BJ (cell line): ENCODE measurements at regions of chr19 and their contacts with region 1.

Region 1: GRCh38 chr19:2648528-2648937 is 54.0 kb downstream of the GNG7 start:
- DNase-seq: no peak
- H3K4me3 ChIP-seq: no peak overlapping the region
- H3K27me3 ChIP-seq: peaks cover 2% of the 10 kb centered on the region; the same call in 1 of the 2 replicates
- CTCF ChIP-seq: peak; percentile 70

Region 2: DNA sequence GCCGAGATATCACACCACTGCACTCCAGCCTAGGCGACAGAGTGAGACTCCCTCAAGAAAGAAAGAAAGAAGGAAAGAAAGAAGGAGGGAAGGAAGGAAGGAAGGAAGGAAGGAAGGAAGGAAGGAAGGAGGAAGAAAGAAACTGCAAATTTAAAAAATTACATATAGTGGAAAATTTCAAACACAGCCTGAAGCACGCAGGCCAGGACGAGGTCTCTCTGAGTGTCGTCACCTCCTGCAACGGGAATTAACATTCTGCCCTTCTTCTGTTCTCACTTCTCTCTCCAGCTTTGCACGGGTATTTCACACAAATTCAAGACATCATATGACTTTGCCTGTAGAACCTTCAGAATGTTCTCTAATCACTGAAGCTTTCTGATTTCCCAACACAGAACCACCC is 54.2 kb before region 1 on chr19:
- CTCF ChIA-PET with region 1: no interaction called
- POLR2A ChIA-PET with region 1: no interaction called
- DNase-seq: no peak
- H3K4me3 ChIP-seq: no peak overlapping the region
- H3K27me3 ChIP-seq: peaks cover 4% of the 10 kb centered on the region; the same call in 1 of the 2 replicates
- CTCF ChIP-seq: no peak

Region 3: GRCh38 chr19:2636897-2637683 is 11.4 kb before region 1 on chr19:
- CTCF ChIA-PET with region 1: interaction called, 16 read pairs
- POLR2A ChIA-PET with region 1: no interaction called
- DNase-seq: no peak
- H3K4me3 ChIP-seq: no peak overlapping the region
- H3K27me3 ChIP-seq: peaks cover 2% of the 10 kb centered on the region; the same call in 1 of the 2 replicates
- CTCF ChIP-seq: peak; percentile 96

Region 4: GRCh38 chr19:2661615-2662014 is 13.1 kb after region 1 on chr19:
- CTCF ChIA-PET with region 1: interaction called, 12 read pairs
- POLR2A ChIA-PET with region 1: no interaction called
- DNase-seq: no peak
- H3K4me3 ChIP-seq: no peak overlapping the region
- H3K27me3 ChIP-seq: peaks cover 1% of the 10 kb centered on the region; the same call in 1 of the 2 replicates
- CTCF ChIP-seq: no peak

Region 5: GRCh38 chr19:2722541-2723344 is 74.2 kb after region 1 on chr19:
- CTCF ChIA-PET with region 1: interaction called, 15 read pairs
- POLR2A ChIA-PET with region 1: no interaction called
- DNase-seq: peak; percentile 33
- H3K4me3 ChIP-seq: no peak overlapping the region
- H3K27me3 ChIP-seq: peaks cover 4% of the 10 kb centered on the region; the same call in 1 of the 2 replicates
- CTCF ChIP-seq: no peak

Region 6: GRCh38 chr19:2750808-2751443 is 102.4 kb after region 1 on chr19:
- CTCF ChIA-PET with region 1: interaction called, 244 read pairs
- POLR2A ChIA-PET with region 1: no interaction called
- DNase-seq: no peak
- H3K4me3 ChIP-seq: no peak overlapping the region
- H3K27me3 ChIP-seq: no peaks in the 10 kb centered on the region
- CTCF ChIP-seq: no peak

Region 7: DNA sequence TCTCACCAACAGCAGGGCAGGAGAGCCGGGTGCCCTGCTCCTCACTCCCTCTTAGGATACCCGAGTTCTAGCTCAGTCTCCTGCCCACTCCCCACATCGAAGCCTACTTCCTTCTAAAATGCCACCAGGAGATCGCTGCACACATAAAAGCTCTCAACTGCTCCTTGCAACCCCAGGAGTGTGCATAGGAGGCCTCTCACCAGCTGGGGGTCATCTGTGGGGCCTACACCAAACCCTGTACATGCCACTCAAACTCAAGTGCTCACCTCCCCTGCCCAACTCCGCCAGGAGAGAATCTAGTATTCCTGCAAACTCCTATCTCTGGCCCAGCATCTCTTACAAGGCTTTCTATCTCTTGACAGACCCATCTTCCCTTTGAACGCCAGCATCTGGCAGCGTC is 131.8 kb after region 1 on chr19:
- CTCF ChIA-PET with region 1: interaction called, 10 read pairs
- POLR2A ChIA-PET with region 1: no interaction called
- DNase-seq: no peak
- H3K4me3 ChIP-seq: no peak overlapping the region
- H3K27me3 ChIP-seq: no peaks in the 10 kb centered on the region
- CTCF ChIP-seq: no peak

Region 8: GRCh38 chr19:2820112-2820702 is 171.7 kb after region 1 on chr19:
- CTCF ChIA-PET with region 1: no interaction called
- POLR2A ChIA-PET with region 1: no interaction called
- DNase-seq: no peak
- H3K4me3 ChIP-seq: peak overlapping the region; percentile 48
- H3K27me3 ChIP-seq: no peaks in the 10 kb centered on the region
- CTCF ChIP-seq: no peak

Region 9: DNA sequence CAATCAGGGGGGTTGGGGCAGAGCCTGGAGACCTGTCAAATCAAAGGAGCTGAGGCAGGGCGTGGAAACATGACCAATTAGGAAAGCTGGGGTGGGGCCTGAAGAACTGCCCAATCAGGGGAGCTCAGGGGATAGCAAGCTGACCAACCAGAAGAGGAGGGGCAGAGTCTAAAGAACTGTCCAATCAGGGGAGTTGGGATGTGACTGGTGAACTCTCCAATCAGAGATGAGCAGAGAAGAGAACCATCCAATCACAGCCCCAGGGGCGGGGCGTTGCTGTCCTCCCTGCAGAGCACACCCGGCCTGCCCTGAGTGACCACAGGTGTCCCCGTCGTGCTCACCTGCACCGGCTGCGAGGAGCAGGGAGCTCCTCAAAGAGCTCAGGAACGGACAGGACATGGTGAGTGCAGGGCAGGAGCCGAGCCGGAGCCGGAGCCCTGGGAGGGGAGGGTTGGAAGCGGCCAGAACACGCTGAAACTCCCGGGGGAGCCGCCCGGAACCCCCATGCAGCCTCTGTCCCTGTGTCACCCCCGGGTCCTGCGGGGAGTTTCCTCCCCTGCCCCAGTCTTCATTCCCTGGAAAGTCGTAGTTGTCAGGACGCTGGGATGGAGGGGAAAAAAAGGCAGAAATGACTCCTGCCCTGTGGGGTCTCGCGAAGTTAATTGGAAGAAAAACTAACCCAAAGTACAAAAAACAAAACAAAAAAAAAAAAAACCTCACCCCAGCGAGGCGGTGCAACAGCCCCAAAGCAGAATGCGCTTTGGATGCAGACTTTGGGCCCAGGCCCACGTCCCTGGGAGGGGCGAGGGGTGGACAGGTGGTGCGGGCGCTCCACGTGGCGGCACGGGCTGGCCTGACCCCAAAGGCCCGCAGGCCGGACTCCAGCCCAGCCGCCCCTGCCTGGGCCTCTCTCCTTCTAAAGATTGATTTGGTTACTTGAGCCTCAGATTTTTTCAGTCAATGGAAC is 218.8 kb after region 1 on chr19 and contains the start of gene ZNF556:
- CTCF ChIA-PET with region 1: interaction called, 10 read pairs
- POLR2A ChIA-PET with region 1: no interaction called
- DNase-seq: no peak
- H3K4me3 ChIP-seq: no peak within 1 kb of the TSS
- H3K27me3 ChIP-seq: no peaks in the 10 kb centered on the region
- CTCF ChIP-seq: no peak
- polyA plus RNA-seq, gene ZNF556: not detected in 2 replicates